ENCODE measurements at regions of chr2 and their contacts with region 1.

Region 1: DNA sequence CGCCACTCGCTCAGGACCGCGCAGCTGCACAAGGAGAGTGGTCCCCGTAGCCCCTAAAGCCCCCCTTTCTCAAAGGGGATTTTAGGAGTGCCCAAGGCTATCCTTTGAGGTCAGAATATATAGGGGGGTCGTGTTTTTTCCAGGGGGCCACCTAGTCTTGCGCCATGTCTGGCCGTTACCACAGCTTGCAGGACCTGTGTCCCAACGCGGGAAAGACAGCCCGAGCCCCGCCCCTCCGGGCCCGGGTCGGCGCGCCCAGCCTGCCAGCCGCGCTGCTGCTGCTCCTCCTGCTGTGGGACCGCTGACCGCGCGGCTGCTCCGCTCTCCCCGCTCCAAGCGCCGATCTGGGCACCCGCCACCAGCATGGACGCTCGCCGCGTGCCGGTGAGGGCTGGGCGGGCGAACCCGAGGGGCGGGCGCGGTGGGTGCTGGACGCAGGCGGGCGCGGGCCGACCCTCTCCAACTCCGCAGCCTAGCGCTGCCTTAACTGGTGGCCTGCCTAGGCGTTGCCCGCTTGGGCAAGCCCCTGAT is at the start of gene CDCA7:
- DNase-seq: peak in 8 of 9 donors; percentile 2 to 84 (median 26)
- ATAC-seq: peak; percentile 64
- H3K4me3 ChIP-seq: peak within 1 kb of the TSS; percentile 67
- H3K4me3 Mint-ChIP-seq: peak within 1 kb of the TSS; percentile 87 to 95 (median 90)
- H3K27ac ChIP-seq: no peak within 1 kb of the TSS
- H3K27ac Mint-ChIP-seq: peak within 1 kb of the TSS in 4 of 9 donors; percentile 23 to 97 (median 46)
- H3K4me1 ChIP-seq: peaks cover 6 to 17% of the 10 kb centered on the region in 2 donors
- H3K4me1 Mint-ChIP-seq: peaks cover 7 to 57% (median 18%) of the 10 kb centered on the region in 7 donors
- H3K27me3 ChIP-seq: peaks cover 0 to 2% of the 10 kb centered on the region in 2 donors
- H3K27me3 Mint-ChIP-seq: peaks cover 18 to 62% (median 50%) of the 10 kb centered on the region in 5 donors
- total RNA-seq, gene CDCA7: 0.46 to 86.7 (median 0.85) TPM

Region 2: DNA sequence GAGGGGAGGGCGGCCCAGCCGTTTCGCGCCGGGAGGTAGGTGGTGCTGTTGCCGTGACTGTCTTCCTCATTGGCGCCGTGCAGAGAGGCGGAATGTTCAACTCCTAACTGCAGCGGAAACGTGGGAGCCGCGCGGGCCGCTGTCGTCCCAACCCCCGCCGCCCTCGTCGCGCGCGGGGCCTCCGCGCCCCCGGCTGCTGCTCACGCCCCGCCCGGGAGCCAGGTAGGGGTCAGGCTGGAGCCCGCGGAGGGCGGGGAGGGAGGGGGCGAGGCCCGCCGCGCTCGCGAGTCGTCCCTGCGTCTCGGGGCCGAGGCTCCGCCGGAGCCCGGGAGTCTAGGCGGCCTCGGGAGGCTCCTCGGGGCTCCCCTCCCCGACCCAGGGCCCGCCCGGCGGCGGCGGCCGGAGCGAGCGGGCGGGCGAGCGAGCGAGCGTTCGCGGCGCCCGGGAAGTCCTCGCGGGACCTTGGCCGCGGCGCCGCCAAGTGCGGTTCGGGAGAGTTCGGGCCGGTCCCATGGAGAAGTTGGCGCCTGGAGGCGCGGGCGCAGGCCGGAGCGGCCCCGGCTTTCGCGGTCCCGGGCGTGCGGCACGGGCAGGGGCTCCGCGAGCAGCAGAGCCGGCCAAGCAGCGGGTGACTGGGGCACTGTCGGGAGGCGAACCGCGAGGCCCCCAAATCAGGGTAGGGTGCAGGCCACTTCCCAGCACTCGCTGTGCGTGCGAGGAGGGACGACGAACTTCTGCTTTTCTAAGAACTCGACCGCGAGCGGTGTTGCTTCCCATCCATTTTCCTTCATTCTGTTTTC is 278.7 kb before region 1 on chr2 and contains the start of gene MAP3K20:
- CTCF ChIA-PET with region 1: no interaction called
- POLR2A ChIA-PET with region 1: no interaction called
- intact Hi-C with region 1: loop called in 1 of 2 experiments (anchors 2 kb)
- DNase-seq: peak in 6 of 9 donors; percentile 13 to 73 (median 27)
- ATAC-seq: peak; percentile 84
- H3K4me3 ChIP-seq: peak within 1 kb of the TSS; percentile 45
- H3K4me3 Mint-ChIP-seq: peak within 1 kb of the TSS; percentile 56 to 89 (median 80)
- H3K27ac ChIP-seq: no peak within 1 kb of the TSS
- H3K27ac Mint-ChIP-seq: peak within 1 kb of the TSS in 2 of 9 donors; percentile 23 to 72
- H3K4me1 ChIP-seq: peaks cover 0 to 10% of the 10 kb centered on the region in 2 donors
- H3K4me1 Mint-ChIP-seq: peaks cover 6 to 25% (median 15%) of the 10 kb centered on the region in 7 donors
- H3K27me3 ChIP-seq: no peaks in the 10 kb centered on the region
- H3K27me3 Mint-ChIP-seq: peaks cover 30 to 57% (median 39%) of the 10 kb centered on the region in 5 donors
- total RNA-seq, gene MAP3K20: 0.30 to 17.0 (median 2.6) TPM

Region 3: GRCh38 chr2:173134703-173135102 is 220.0 kb before region 1 on chr2:
- CTCF ChIA-PET with region 1: no interaction called
- POLR2A ChIA-PET with region 1: no interaction called
- intact Hi-C with region 1: loop called in 1 of 2 experiments (anchors 10 kb)
- DNase-seq: no peak
- ATAC-seq: peak; percentile 38
- H3K4me3 ChIP-seq: no peak overlapping the region
- H3K4me3 Mint-ChIP-seq: peak overlapping the region in 1 of 10 donors; percentile 58
- H3K27ac ChIP-seq: no peak overlapping the region
- H3K27ac Mint-ChIP-seq: peak overlapping the region in 1 of 9 donors; percentile 72
- H3K4me1 ChIP-seq: peaks cover 3 to 6% of the 10 kb centered on the region in 2 donors
- H3K4me1 Mint-ChIP-seq: peaks cover 16 to 62% (median 19%) of the 10 kb centered on the region in 7 donors
- H3K27me3 ChIP-seq: no peaks in the 10 kb centered on the region
- H3K27me3 Mint-ChIP-seq: peaks cover 15 to 29% (median 28%) of the 10 kb centered on the region in 5 donors

Region 4: GRCh38 chr2:173239644-173240043 is 115.0 kb before region 1 on chr2:
- CTCF ChIA-PET with region 1: no interaction called
- POLR2A ChIA-PET with region 1: no interaction called
- intact Hi-C with region 1: no loop called
- DNase-seq: no peak
- ATAC-seq: no peak
- H3K4me3 ChIP-seq: no peak overlapping the region
- H3K4me3 Mint-ChIP-seq: no peak overlapping the region
- H3K27ac ChIP-seq: no peak overlapping the region
- H3K27ac Mint-ChIP-seq: no peak overlapping the region
- H3K4me1 ChIP-seq: no peaks in the 10 kb centered on the region
- H3K4me1 Mint-ChIP-seq: peaks cover 0 to 4% (median 0%) of the 10 kb centered on the region in 7 donors
- H3K27me3 ChIP-seq: peaks cover 0 to 2% of the 10 kb centered on the region in 2 donors
- H3K27me3 Mint-ChIP-seq: peaks cover 0 to 20% (median 8%) of the 10 kb centered on the region in 5 donors

Region 5: GRCh38 chr2:173370198-173370597 is 15.5 kb after region 1 on chr2:
- CTCF ChIA-PET with region 1: no interaction called
- POLR2A ChIA-PET with region 1: no interaction called
- intact Hi-C with region 1: loop called in 1 of 2 experiments (anchors 1 kb)
- DNase-seq: no peak
- ATAC-seq: no peak
- H3K4me3 ChIP-seq: no peak overlapping the region
- H3K4me3 Mint-ChIP-seq: peak overlapping the region in 1 of 10 donors; percentile 63
- H3K27ac ChIP-seq: no peak overlapping the region
- H3K27ac Mint-ChIP-seq: peak overlapping the region in 3 of 9 donors; percentile 43 to 85 (median 49)
- H3K4me1 ChIP-seq: peaks cover 0 to 5% of the 10 kb centered on the region in 2 donors
- H3K4me1 Mint-ChIP-seq: peaks cover 0 to 28% (median 7%) of the 10 kb centered on the region in 7 donors
- H3K27me3 ChIP-seq: no peaks in the 10 kb centered on the region
- H3K27me3 Mint-ChIP-seq: no peaks in the 10 kb centered on the region

Region 6: DNA sequence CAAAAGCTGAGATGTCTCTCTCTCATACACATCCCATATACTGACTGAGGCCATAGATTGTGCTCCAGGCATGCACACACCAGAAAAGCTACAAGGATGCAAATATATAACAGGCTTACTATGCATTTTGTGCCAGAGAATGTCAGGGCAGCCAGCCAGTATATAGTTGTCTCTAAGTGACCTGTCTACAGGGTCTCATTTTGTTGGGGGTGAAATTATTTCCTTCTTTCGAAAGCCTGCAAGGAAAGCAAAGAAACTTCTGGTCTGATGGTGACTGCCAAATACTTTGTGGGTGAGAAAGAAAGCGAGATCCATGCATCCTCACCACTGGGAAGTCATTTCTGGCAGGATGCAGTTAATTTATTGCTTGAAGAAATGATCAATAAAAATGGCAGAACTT is 70.2 kb after region 1 on chr2:
- CTCF ChIA-PET with region 1: no interaction called
- POLR2A ChIA-PET with region 1: no interaction called
- intact Hi-C with region 1: no loop called
- DNase-seq: no peak
- ATAC-seq: no peak
- H3K4me3 ChIP-seq: no peak overlapping the region
- H3K4me3 Mint-ChIP-seq: no peak overlapping the region
- H3K27ac ChIP-seq: no peak overlapping the region
- H3K27ac Mint-ChIP-seq: no peak overlapping the region
- H3K4me1 ChIP-seq: no peaks in the 10 kb centered on the region
- H3K4me1 Mint-ChIP-seq: peaks cover 0 to 2% (median 0%) of the 10 kb centered on the region in 7 donors
- H3K27me3 ChIP-seq: no peaks in the 10 kb centered on the region
- H3K27me3 Mint-ChIP-seq: peaks cover 9 to 38% (median 22%) of the 10 kb centered on the region in 5 donors

Region 7: GRCh38 chr2:174248187-174248997 is 893.7 kb after region 1 on chr2 and contains the start of gene OLA1:
- CTCF ChIA-PET with region 1: no interaction called
- POLR2A ChIA-PET with region 1: no interaction called
- intact Hi-C with region 1: loop called in 1 of 2 experiments (anchors 2 kb)
- DNase-seq: peak; percentile 91 to 99 (median 95)
- ATAC-seq: peak; percentile 99
- H3K4me3 ChIP-seq: peak within 1 kb of the TSS; percentile 90
- H3K4me3 Mint-ChIP-seq: peak within 1 kb of the TSS; percentile 71 to 88 (median 86)
- H3K27ac ChIP-seq: peak within 1 kb of the TSS; percentile 82
- H3K27ac Mint-ChIP-seq: peak within 1 kb of the TSS; percentile 67 to 91 (median 79)
- H3K4me1 ChIP-seq: peaks cover 6 to 12% of the 10 kb centered on the region in 2 donors
- H3K4me1 Mint-ChIP-seq: peaks cover 18 to 32% (median 25%) of the 10 kb centered on the region in 7 donors
- H3K27me3 ChIP-seq: no peaks in the 10 kb centered on the region
- H3K27me3 Mint-ChIP-seq: peaks cover 0 to 5% (median 0%) of the 10 kb centered on the region in 5 donors
- total RNA-seq, gene OLA1: 34.4 to 84.7 (median 40.3) TPM

Measured in naive thymus-derived CD4-positive, alpha-beta T cell (primary cell).